Activated CD4-positive, alpha-beta memory T cell treated with anti-CD3 and anti-CD28 coated beads for 36 hours (primary cell): ENCODE measurements at regions of chr7 and their contacts with region 1.

Region 1: DNA sequence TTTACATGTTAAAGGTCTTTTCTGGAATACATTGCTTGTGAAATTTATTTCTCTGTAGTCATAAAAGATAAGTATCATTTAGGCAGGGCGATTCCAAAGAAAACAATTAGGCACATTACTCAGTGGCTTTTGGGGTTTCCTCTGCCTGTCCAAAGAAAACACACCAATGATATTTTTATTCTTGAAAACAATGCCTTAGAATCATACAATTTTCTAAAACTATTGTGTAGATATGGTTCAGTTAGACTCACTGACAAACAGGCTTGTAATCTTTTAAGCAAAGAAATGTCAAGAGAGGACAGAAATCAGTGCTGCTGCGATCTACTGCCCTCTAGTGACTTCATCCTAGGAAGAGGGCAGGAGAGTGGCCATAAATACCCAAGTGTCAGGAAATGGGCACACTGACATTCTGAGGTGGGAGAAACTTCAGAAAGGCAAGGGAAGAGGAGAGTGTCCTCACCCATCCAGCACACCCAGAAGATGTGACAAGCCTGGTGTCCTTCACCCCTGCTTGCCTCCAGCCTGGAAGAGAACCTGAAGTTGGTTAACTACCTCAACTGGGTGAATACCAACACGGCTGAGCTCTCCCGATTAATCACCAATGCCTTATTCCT is 120.5 kb downstream of the GALNT11 start:
- DNase-seq: peak; percentile 45
- H3K4me3 Mint-ChIP-seq: no peak overlapping the region
- H3K27ac Mint-ChIP-seq: peak overlapping the region; percentile 90
- H3K4me1 Mint-ChIP-seq: peaks cover 41% of the 10 kb centered on the region
- H3K27me3 Mint-ChIP-seq: no peaks in the 10 kb centered on the region

Region 2: GRCh38 chr7:151936207-151936606 is 209.8 kb before region 1 on chr7:
- CTCF ChIA-PET with region 1: no interaction called
- POLR2A ChIA-PET with region 1: no interaction called
- intact Hi-C with region 1: loop called (anchors 10 kb)
- DNase-seq: no peak
- H3K4me3 Mint-ChIP-seq: peak overlapping the region; percentile 31
- H3K27ac Mint-ChIP-seq: peak overlapping the region; percentile 52
- H3K4me1 Mint-ChIP-seq: peaks cover 17% of the 10 kb centered on the region
- H3K27me3 Mint-ChIP-seq: peaks cover 2% of the 10 kb centered on the region

Region 3: DNA sequence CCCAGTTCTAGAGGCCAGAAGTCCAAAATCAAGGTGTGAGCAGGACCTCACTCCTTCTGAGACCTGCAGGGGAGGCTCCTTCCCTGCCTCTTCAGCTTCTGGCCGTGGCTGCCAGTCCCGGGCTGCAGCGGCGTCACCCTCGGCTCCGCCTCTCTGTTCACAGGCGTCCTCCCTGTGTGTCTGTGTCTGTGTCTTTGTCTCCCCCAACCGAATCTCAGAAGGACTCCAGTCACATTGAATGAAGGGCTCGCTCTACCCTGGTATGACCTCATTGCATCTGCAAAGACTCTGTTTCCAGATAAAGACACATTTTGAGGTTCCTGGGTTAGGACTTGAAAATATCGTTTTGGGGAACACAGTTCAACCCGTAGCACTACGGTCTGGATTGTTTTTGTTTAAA is 153.6 kb before region 1 on chr7:
- CTCF ChIA-PET with region 1: no interaction called
- POLR2A ChIA-PET with region 1: no interaction called
- intact Hi-C with region 1: loop called (anchors 5 kb)
- DNase-seq: peak; percentile 60
- H3K4me3 Mint-ChIP-seq: no peak overlapping the region
- H3K27ac Mint-ChIP-seq: no peak overlapping the region
- H3K4me1 Mint-ChIP-seq: peaks cover 13% of the 10 kb centered on the region
- H3K27me3 Mint-ChIP-seq: peaks cover 36% of the 10 kb centered on the region

Region 4: DNA sequence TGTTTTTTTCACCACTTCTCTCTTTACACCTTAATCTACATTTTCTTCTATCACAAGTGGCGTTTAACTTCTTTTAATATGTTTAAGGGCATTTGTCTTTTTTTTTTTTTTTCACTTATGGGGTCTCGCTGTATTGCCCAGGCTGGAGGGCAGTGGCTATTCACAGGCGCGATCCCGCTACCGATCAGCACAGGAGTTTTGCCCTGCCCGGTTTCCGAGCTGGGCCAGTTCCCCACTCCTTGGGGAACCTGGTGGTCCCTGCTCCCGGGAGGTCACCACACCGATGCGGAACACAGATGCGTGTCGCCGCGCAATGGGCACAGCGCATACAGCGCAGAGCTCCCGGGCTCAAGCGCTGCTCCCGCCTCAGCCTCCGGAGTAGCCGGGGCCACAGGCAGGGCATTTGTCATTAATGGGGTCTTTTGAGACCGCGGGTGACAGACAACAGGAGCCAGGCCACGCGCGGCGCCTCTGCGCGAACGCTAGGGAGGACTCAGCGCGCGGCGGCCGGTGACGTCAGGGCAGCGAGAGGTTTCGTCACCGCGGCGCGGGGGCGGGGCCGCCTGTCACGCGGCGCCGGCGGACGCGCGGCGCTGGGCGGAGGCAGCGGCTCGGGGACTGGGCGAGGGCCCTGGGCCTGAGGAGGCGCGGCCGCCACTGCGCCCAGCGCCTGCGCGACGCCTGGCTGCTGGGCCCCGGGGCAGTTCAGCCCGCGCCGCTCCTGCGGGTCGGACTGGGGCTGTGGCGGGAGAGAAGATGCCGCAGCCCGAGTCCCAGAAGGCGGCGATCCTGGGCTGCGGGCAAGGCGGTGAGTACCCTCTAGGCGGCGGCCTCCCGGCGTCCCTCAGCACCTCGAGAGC is 120.7 kb before region 1 on chr7 and contains the start of gene GALNT11:
- CTCF ChIA-PET with region 1: no interaction called
- POLR2A ChIA-PET with region 1: no interaction called
- intact Hi-C with region 1: loop called (anchors 5 kb)
- DNase-seq: peak; percentile 89
- H3K4me3 Mint-ChIP-seq: peak within 1 kb of the TSS; percentile 80
- H3K27ac Mint-ChIP-seq: peak within 1 kb of the TSS; percentile 65
- H3K4me1 Mint-ChIP-seq: peaks cover 32% of the 10 kb centered on the region
- H3K27me3 Mint-ChIP-seq: no peaks in the 10 kb centered on the region
- total RNA-seq, gene GALNT11: 17.7 to 19.7 TPM

Region 5: DNA sequence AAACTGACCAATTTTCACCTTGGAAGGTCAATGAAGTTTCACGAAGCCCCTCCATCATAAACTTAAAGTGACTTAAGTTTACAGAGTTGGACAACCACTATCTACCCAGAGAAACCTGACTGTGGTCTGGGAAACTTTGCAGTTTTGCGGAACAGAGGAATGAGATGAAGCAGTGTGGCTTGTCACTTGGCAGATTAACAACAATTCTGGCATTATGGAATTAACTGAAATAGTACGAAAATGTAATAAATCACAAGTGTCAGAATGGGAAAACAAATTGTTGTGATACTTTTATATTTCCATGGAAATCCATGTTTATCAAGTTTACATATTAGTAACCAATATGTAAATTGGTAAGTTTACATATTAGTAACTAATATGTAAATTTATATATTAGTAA is 284.9 kb after region 1 on chr7:
- CTCF ChIA-PET with region 1: no interaction called
- POLR2A ChIA-PET with region 1: no interaction called
- intact Hi-C with region 1: loop called (anchors 5 kb)
- DNase-seq: no peak
- H3K4me3 Mint-ChIP-seq: no peak overlapping the region
- H3K27ac Mint-ChIP-seq: no peak overlapping the region
- H3K4me1 Mint-ChIP-seq: peaks cover 49% of the 10 kb centered on the region
- H3K27me3 Mint-ChIP-seq: no peaks in the 10 kb centered on the region